ENCODE measurements at regions of chr10 and their contacts with region 1.

Region 1: DNA sequence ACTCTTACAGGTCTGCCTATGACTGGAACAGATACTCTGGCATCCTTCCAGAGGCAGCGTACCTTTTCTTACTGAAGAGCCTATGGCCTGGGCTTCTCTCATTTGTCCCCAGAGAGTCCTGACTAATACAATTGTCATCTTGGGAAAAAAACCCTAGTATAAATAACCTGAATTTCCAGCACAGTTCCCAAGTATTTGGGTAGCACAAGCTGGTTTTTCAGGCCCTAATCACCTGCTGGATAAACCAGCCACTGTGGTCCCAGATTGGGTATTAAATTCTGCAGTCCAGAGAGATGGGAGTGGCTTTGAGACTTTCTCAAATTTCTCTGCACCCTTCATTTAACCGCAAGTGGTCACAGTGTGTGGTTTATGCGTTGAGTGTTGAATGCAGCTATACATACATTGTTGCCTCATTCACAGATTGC is 186.8 kb upstream of the NEBL start:
- DNase-seq: no peak
- ATAC-seq: no peak

Region 2: GRCh38 chr10:21265621-21266020 is 181.7 kb after region 1 on chr10:
- intact Hi-C with region 1: loop called (anchors 10 kb)
- DNase-seq: no peak
- ATAC-seq: no peak

Region 3: DNA sequence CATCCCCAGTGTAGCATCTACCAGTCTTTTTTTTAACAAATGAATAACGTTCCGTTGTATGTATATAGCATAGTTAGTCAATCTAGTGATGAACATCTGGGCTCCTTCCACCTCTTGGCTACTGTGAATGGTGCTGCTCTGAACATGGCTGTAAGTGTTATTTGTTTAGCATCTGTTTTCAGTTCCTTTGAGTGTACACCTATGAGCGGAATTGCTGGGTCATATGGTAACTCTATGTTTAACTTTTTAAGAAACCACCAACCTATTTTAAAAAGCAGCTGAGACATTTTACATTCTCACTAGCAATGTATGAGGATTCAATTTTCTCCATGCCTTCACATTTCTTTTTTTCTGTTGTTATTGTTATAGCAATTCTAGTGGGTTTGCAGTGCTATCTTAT is 741.5 kb after region 1 on chr10:
- intact Hi-C with region 1: no loop called
- DNase-seq: no peak
- ATAC-seq: no peak